BJ (cell line): ENCODE measurements at regions of chr10 and their contacts with region 1.

Region 1: GRCh38 chr10:30639946-30640786 is 10.6 kb upstream of the LYZL2 start:
- DNase-seq: peak; percentile 23
- H3K4me3 ChIP-seq: no peak overlapping the region
- H3K27me3 ChIP-seq: no peaks in the 10 kb centered on the region
- CTCF ChIP-seq: peak; percentile 89

Region 2: GRCh38 chr10:30656233-30656632 is 16.1 kb after region 1 on chr10:
- CTCF ChIA-PET with region 1: interaction called, 14 read pairs
- POLR2A ChIA-PET with region 1: no interaction called
- DNase-seq: no peak
- H3K4me3 ChIP-seq: no peak overlapping the region
- H3K27me3 ChIP-seq: peaks cover 3% of the 10 kb centered on the region
- CTCF ChIP-seq: no peak

Region 3: GRCh38 chr10:30671026-30671616 is 31.0 kb after region 1 on chr10:
- CTCF ChIA-PET with region 1: interaction called, 12 read pairs
- POLR2A ChIA-PET with region 1: no interaction called
- DNase-seq: peak; percentile 59
- H3K4me3 ChIP-seq: no peak overlapping the region
- H3K27me3 ChIP-seq: peaks cover 2% of the 10 kb centered on the region; the same call in 1 of the 2 replicates
- CTCF ChIP-seq: peak; percentile 74